ENCODE measurements at regions of chr2 and their contacts with region 1.

Region 1: DNA sequence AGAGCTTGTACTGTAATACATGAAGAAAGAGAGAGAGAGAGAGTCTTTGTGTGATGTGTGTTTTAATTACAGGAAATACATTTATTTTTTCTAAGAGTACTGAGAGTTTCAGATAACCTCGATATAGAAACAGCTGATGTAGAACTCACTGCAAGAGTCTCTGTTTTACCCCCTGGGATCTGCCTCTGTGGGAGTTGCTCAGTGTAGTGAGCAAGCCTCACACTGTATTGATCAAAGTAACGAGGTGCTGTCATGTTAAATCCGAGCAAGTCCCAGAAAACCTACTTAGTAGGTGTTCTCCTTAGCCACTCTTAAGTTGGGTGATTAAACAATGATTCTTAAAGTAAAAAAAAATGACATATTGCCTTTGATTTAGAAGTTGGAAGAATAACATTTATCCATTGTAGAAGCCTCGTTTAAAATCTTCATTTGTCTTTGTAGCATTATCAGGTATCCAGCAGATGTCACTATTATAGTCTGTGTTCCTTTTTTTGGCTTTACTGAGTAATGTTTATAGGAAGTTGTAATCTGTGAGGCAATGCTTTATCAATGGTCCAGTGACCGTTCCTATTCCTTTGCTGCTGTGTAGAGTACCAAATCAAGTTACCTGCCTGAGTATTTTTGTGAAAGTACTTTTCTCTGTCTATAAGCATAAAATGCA is 219.0 kb downstream of the MYO3B start:
- DNase-seq: peak in 1 of 35 experiments; percentile 7
- ATAC-seq: no peak
- H3K4me3 ChIP-seq: no peak overlapping the region
- H3K4me3 Mint-ChIP-seq: no peak overlapping the region
- H3K27ac ChIP-seq: no peak overlapping the region
- H3K27ac Mint-ChIP-seq: no peak overlapping the region
- H3K4me1 ChIP-seq: no peaks in the 10 kb centered on the region
- H3K4me1 Mint-ChIP-seq: peaks cover 0 to 4% (median 0%) of the 10 kb centered on the region in 3 donors
- H3K27me3 ChIP-seq: peaks cover 0 to 5% of the 10 kb centered on the region in 2 experiments
- H3K27me3 Mint-ChIP-seq: peaks cover 39 to 49% of the 10 kb centered on the region in 2 donors

Region 2: GRCh38 chr2:170409164-170409535 is 12.2 kb after region 1 on chr2:
- CTCF ChIA-PET with region 1: interaction called in 1 of 2 experiments, 19 read pairs
- POLR2A ChIA-PET with region 1: no interaction called
- DNase-seq: peak; percentile 30 to 85 (median 62)
- ATAC-seq: peak; percentile 53 to 78 (median 60)
- H3K4me3 ChIP-seq: peak overlapping the region in 1 of 2 donors; percentile 11
- H3K4me3 Mint-ChIP-seq: peak overlapping the region; percentile 40 to 58 (median 52)
- H3K27ac ChIP-seq: no peak overlapping the region
- H3K27ac Mint-ChIP-seq: no peak overlapping the region
- H3K4me1 ChIP-seq: peaks cover 0 to 6% of the 10 kb centered on the region in 2 experiments
- H3K4me1 Mint-ChIP-seq: peaks cover 11 to 15% (median 15%) of the 10 kb centered on the region in 3 donors
- H3K27me3 ChIP-seq: peaks cover 0 to 7% of the 10 kb centered on the region in 2 experiments
- H3K27me3 Mint-ChIP-seq: peaks cover 26 to 32% of the 10 kb centered on the region in 2 donors

Region 3: DNA sequence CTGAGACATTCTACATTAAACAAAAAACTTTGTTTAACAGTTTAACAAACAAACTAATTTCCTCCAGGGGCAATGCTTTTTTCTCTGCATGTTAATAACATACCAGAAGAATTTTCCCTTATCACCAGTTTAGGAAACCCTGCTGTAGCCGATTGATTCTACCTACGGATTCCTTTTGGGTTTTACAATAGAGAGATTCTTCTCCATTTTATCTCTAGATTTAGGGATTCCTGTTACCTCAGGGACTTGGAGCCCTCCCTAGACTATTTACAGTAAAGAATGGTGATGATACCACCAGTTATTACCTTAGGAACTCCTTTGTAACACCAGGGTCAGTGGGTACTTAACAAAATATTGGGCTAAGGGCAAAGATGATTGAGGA is 367.9 kb after region 1 on chr2:
- CTCF ChIA-PET with region 1: interaction called in 1 of 2 experiments, 10 read pairs
- POLR2A ChIA-PET with region 1: no interaction called
- DNase-seq: no peak
- ATAC-seq: no peak
- H3K4me3 ChIP-seq: no peak overlapping the region
- H3K4me3 Mint-ChIP-seq: no peak overlapping the region
- H3K27ac ChIP-seq: no peak overlapping the region
- H3K27ac Mint-ChIP-seq: no peak overlapping the region
- H3K4me1 ChIP-seq: peaks cover 0 to 10% of the 10 kb centered on the region in 2 experiments
- H3K4me1 Mint-ChIP-seq: peaks cover 5 to 6% (median 5%) of the 10 kb centered on the region in 3 donors
- H3K27me3 ChIP-seq: no peaks in the 10 kb centered on the region
- H3K27me3 Mint-ChIP-seq: peaks cover 4 to 11% of the 10 kb centered on the region in 2 donors

Measured in T-cell (primary cell).